Lower leg skin (tissue), 4 donors: ENCODE measurements at regions of chr1 and their contacts with region 1.

Region 1: DNA sequence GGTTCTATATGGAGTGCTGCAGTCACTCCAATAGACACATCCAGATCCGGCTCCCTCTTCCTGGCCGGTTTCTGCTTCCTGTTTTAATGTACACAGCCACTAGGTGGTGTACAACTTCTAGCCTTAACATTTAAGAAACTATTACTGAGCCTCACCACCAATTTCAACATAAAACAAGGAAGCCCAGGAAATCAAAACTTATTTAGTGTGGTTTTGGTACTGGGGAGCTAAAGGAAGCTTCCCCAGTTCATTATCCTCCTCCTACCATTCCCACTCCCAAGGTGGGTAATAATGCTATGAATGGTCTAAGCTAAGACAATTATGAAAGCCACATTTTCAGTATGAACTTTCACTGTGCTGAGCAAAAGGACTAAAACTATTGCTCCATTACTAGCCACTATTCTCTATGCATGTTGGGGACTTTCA is 25.5 kb upstream of the MTMR11 start:
- DNase-seq: peak in 1 of 2 donors; percentile 77
- H3K4me3 ChIP-seq: no peak overlapping the region
- CTCF ChIP-seq: peak in 1 of 3 donors; percentile 60
- POLR2A ChIP-seq: no peak

Region 2: DNA sequence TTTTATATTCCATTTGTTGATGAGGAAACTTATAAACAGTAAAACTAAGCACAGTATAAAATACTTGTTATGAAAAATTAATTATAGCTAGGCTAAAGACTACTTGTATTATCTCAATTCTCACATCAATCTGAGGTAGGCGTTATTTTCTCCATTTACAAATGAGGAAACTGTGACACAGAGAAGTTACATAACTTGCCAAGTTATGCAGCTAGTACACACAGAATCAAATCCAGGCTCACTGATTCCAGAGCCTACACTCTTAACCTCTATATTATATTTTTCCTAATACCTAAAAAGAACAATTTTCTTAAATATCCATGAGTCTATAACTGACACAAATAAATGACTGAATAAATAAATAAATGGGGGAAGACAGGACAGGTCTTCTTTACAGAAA is 94.3 kb after region 1 on chr1:
- intact Hi-C with region 1: loop called (anchors 5 kb)
- DNase-seq: no peak
- H3K4me3 ChIP-seq: no peak overlapping the region
- CTCF ChIP-seq: no peak
- POLR2A ChIP-seq: no peak

Region 3: GRCh38 chr1:150176593-150176992 is 214.5 kb after region 1 on chr1:
- intact Hi-C with region 1: loop called (anchors 10 kb)
- DNase-seq: no peak
- H3K4me3 ChIP-seq: no peak overlapping the region
- CTCF ChIP-seq: no peak
- POLR2A ChIP-seq: no peak

Region 4: GRCh38 chr1:150256198-150256553 is 294.0 kb after region 1 on chr1:
- intact Hi-C with region 1: no loop called
- DNase-seq: no peak
- H3K4me3 ChIP-seq: no peak overlapping the region
- CTCF ChIP-seq: no peak
- POLR2A ChIP-seq: no peak

Region 5: GRCh38 chr1:151871252-151872030 is 1909.3 kb after region 1 on chr1:
- intact Hi-C with region 1: loop called (anchors 5 kb)
- DNase-seq: no peak
- H3K4me3 ChIP-seq: no peak overlapping the region
- CTCF ChIP-seq: no peak
- POLR2A ChIP-seq: no peak